ENCODE measurements at regions of chr2 and their contacts with region 1.

Region 1: GRCh38 chr2:65576861-65577601 is 144.6 kb upstream of the SPRED2 start:
- DNase-seq: no peak
- ATAC-seq: no peak
- H3K4me3 Mint-ChIP-seq: no peak overlapping the region
- H3K27ac Mint-ChIP-seq: no peak overlapping the region
- H3K4me1 Mint-ChIP-seq: no peaks in the 10 kb centered on the region
- H3K27me3 Mint-ChIP-seq: peaks cover 26% of the 10 kb centered on the region

Region 2: DNA sequence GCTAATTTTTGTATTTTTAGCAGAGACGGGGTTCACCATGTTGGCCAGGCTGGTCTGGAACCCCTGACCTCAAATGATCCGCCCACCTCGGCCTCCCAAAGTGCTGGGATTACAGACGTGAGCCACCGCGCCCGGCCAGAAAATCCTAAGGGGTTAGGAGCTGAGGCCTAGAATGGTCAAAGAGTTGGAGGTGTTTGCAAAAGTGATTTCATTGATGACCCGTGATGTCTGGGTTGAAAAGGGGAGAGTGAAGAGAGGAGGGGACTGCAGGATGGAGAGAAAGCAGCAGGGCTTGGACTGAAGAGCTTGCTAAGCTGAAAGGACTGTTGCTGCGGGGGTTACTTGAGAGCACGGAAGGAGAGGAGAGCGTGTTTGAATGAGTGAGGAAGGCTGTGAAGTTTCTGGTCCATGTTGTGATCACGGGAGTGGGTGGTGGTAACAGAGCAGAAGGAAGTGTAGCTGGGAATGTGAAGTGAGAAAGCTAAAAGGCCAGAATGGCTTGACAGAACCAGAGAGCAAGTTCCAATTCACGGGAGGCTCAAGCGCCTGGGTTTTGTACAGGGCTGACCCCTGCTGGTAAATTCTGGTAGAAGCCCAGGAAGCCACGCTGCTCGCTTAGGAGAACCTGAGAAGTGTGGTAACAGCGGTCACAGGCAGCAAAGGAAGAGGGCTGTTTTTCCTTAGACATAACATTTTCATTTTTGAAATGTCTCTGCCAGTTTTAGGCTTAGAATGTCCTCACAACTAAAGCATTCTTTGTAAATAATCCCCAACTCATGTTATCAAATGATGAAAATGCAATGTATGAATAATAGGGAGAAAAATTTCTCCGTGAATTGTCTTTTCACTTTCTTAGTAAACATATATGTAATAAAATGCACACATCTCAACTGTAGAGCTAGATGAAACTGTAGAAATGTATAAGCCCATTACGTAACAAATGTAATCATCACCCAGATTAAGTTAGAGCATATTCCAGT is 389.9 kb before region 1 on chr2:
- CTCF ChIA-PET with region 1: interaction called, 11 read pairs
- POLR2A ChIA-PET with region 1: no interaction called
- DNase-seq: peak; percentile 78
- ATAC-seq: peak; percentile 98
- H3K4me3 Mint-ChIP-seq: no peak overlapping the region
- H3K27ac Mint-ChIP-seq: no peak overlapping the region
- H3K4me1 Mint-ChIP-seq: peaks cover 11% of the 10 kb centered on the region
- H3K27me3 Mint-ChIP-seq: peaks cover 3% of the 10 kb centered on the region

Measured in activated CD8-positive, alpha-beta T cell treated with anti-CD3 and anti-CD28 coated beads, Interleukin-2, amount 10 ng/mL, durations not matched to agents 7 days and 5 days (primary cell).